ENCODE measurements at regions of chr10 and their contacts with region 1.

Region 1: DNA sequence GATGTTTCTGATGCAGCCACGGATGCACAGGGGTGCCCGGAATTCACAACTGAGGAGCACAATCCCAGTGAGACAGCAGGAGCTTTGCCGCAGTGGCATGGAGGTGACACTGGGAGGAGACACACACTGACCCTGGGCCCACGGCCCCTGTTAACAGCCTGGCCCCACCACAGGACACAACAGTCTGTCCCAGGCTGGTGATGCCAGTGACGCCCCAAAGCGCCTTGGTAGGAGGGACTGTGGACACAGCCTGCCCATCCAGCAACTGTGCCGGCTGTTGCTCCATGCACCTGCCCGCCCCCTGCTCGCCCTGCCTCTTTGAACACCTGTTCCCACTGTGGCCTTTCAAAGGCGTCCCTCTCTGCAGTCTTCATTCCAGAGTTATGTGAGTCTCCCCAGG is 49.8 kb downstream of the KLF6 start:
- DNase-seq: no peak

Region 2: DNA sequence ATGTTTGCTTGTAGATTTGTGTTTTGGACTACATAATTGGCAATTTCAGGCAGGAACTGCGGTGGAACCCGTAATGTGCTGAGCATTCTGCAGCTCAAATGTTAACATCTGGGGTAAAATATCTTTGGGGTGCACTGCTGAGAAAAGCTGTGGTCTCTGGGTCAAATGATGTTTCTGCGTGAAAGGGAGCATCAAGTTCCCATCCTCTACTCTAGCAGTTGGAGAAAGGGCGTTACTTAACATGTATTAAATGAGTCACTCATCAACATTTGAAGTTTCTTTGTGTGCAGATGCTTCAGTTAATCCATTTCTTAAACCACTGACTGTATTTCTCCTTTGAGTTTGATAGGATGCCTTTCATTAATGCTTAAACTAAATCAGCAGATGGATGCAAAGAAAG is 289.5 kb before region 1 on chr10:
- intact Hi-C with region 1: loop called in 1 of 2 experiments (anchors 10 kb)
- DNase-seq: no peak

Measured in posterior vena cava (tissue), 2 donors.